ENCODE measurements at regions of chr9 and their contacts with region 1.

Region 1: DNA sequence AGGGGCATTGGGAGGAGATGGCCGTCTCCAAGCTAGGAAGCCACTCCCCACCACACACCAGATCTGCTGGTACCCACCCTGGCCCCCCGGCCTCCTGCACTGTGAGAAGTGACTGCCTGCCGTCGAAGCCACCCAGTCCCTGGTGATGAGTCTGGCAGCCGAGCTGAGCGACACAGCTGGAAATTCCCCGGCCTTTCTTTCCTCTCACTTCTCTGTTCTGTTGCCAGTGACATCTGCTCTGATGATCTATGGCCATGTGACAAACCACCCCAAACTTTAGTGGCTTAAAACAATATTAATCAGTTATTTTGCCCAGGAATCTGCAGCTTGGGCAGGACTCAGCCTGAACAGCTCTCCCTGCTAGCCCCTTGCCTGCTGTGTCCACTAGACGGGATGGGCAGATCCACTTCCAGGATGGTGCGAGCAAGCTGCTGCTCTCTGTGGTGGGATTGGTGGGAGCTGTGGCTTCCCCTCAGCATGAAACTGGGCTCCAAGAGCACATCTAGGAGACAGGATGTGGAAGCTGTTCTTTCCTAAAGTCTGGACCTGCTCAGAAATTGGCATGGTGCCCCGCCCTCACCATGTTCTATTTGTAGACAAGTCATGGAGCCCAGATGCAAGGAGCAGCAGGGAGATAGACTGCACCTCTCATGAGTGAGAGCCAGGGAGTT is 211.2 kb downstream of the GADD45G start:
- DNase-seq: peak; percentile 87
- CTCF ChIP-seq: no peak

Region 2: GRCh38 chr9:89706731-89707191 is 109.3 kb before region 1 on chr9:
- CTCF ChIA-PET with region 1: no interaction called
- POLR2A ChIA-PET with region 1: interaction called, 13 read pairs
- DNase-seq: peak; percentile 32
- CTCF ChIP-seq: no peak

Region 3: GRCh38 chr9:89802781-89803355 is 13.2 kb before region 1 on chr9:
- CTCF ChIA-PET with region 1: interaction called, 31 read pairs
- POLR2A ChIA-PET with region 1: interaction called, 5 read pairs
- DNase-seq: no peak
- CTCF ChIP-seq: no peak

Measured in GM10248 (cell line).